ENCODE measurements at regions of chr2 and their contacts with region 1.

Region 1: GRCh38 chr2:196088203-196088602 is 19.6 kb upstream of the DNAH7 start:
- DNase-seq: no peak
- ATAC-seq: no peak
- H3K4me3 ChIP-seq: no peak overlapping the region
- H3K27ac ChIP-seq: no peak overlapping the region
- H3K4me1 ChIP-seq: no peaks in the 10 kb centered on the region
- H3K27me3 ChIP-seq: no peaks in the 10 kb centered on the region
- CTCF ChIP-seq: no peak
- POLR2A ChIP-seq: no peak

Region 2: DNA sequence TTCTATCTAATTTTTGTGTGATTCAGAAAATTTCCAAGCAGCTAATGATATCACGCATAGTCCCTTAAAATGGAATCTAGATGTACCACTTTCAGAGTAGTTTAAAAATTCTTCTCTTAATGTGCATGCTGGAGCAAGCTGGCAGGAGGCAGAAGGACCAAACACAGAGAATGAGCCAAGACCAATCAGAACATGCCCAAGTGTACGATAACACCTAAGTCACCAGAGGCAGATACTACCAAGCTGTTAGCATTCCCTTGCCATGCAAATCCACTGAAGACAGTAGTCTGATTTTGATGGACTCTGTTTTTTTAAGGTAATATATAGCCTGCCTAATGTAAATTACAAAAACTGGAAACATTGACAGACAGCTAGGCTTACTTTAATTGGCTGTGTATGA is 128.9 kb before region 1 on chr2:
- in situ Hi-C with region 1: no loop called
- intact Hi-C with region 1: no loop called
- DNase-seq: no peak
- ATAC-seq: no peak
- H3K4me3 ChIP-seq: no peak overlapping the region
- H3K27ac ChIP-seq: no peak overlapping the region
- H3K4me1 ChIP-seq: no peaks in the 10 kb centered on the region
- H3K27me3 ChIP-seq: no peaks in the 10 kb centered on the region
- CTCF ChIP-seq: no peak
- POLR2A ChIP-seq: no peak

Region 3: GRCh38 chr2:196131384-196131937 is 43.3 kb after region 1 on chr2:
- in situ Hi-C with region 1: no loop called
- intact Hi-C with region 1: no loop called
- DNase-seq: no peak
- ATAC-seq: no peak
- H3K4me3 ChIP-seq: no peak overlapping the region
- H3K27ac ChIP-seq: no peak overlapping the region
- H3K4me1 ChIP-seq: no peaks in the 10 kb centered on the region
- H3K27me3 ChIP-seq: no peaks in the 10 kb centered on the region
- CTCF ChIP-seq: peak in 1 of 5 experiments; percentile 49
- POLR2A ChIP-seq: no peak

Region 4: GRCh38 chr2:196277002-196277401 is 188.8 kb after region 1 on chr2:
- in situ Hi-C with region 1: loop called in 3 of 4 experiments (anchors 10 to 25 kb)
- intact Hi-C with region 1: no loop called
- DNase-seq: no peak
- ATAC-seq: no peak
- H3K4me3 ChIP-seq: no peak overlapping the region
- H3K27ac ChIP-seq: no peak overlapping the region
- H3K4me1 ChIP-seq: peaks cover 0 to 6% of the 10 kb centered on the region in 2 donors
- H3K27me3 ChIP-seq: no peaks in the 10 kb centered on the region
- CTCF ChIP-seq: peak in 4 of 5 experiments; percentile 6 to 46 (median 25)
- POLR2A ChIP-seq: no peak

Region 5: DNA sequence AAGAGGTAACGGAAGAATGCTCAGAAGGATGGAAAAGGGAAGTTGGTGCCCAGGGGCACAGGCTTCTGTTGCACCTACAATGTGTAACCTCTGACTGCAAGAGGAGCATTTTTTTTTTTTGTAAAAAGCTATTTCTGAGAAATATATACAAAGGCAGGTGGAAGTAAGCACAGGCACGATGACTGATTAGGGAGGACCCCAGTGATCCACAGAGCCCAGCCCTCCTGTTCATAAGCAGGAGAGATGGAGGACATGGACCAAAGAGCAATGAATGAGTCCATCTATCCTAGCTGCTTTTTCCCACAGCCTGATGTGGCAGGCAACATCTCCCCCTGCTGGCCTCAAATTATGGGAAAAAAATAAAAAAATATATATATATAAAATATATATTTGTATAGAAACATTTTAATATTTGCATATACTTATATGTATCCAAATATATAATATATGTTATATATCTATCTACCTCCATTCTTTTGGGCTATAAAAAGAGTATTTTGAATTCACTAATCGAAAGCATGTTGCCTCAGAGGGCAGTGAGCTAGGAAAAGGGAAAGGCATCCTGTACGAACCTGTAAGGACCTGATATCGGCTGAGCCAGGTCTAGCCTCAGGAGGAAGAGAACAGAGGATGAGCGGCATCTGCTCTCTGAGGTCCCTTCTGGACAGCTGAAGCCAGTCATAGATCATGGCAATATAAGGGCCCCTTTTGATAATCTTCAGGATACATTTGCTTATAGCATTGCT is 249.2 kb after region 1 on chr2:
- in situ Hi-C with region 1: loop called in 1 of 4 experiments (anchors 25 kb)
- intact Hi-C with region 1: no loop called
- DNase-seq: no peak
- ATAC-seq: no peak
- H3K4me3 ChIP-seq: no peak overlapping the region
- H3K27ac ChIP-seq: no peak overlapping the region
- H3K4me1 ChIP-seq: no peaks in the 10 kb centered on the region
- H3K27me3 ChIP-seq: no peaks in the 10 kb centered on the region
- CTCF ChIP-seq: peak in 2 of 5 experiments; percentile 26 to 39
- POLR2A ChIP-seq: no peak

Region 6: DNA sequence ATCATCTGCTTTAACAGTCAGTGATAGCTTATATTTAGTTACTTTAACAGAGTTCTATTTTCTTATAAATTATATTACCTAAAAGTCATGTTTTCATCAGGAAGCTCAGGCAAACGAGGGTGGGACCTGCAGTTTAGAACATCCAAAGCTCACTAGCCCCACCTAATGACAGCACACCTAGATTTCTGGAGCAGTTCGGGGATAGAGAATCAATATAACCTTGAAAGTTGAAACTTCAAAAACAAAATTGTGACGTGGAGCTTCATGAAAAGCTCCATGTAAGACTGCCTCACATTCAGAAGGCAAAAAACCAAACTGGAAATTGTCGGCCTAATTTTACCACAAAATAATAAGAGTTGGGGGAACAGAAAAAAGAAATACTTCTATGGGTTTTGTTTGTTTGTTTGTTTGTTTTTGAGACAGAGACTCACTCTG is 365.4 kb after region 1 on chr2:
- in situ Hi-C with region 1: loop called in 1 of 4 experiments (anchors 25 kb)
- intact Hi-C with region 1: no loop called
- DNase-seq: no peak
- ATAC-seq: no peak
- H3K4me3 ChIP-seq: no peak overlapping the region
- H3K27ac ChIP-seq: no peak overlapping the region
- H3K4me1 ChIP-seq: no peaks in the 10 kb centered on the region
- H3K27me3 ChIP-seq: no peaks in the 10 kb centered on the region
- CTCF ChIP-seq: peak in 3 of 5 experiments; percentile 19 to 46 (median 37)
- POLR2A ChIP-seq: no peak